ENCODE measurements at regions of chr1 and their contacts with region 1.

Region 1: GRCh38 chr1:27568300-27569087 is 35.5 kb downstream of the AHDC1 start:
- H3K4me3 ChIP-seq: peak overlapping the region; percentile 22
- H3K27ac ChIP-seq: no peak overlapping the region
- H3K4me1 ChIP-seq: peaks cover 8% of the 10 kb centered on the region; the same call in 1 of the 2 replicates
- CTCF ChIP-seq: peak; percentile 86

Region 2: DNA sequence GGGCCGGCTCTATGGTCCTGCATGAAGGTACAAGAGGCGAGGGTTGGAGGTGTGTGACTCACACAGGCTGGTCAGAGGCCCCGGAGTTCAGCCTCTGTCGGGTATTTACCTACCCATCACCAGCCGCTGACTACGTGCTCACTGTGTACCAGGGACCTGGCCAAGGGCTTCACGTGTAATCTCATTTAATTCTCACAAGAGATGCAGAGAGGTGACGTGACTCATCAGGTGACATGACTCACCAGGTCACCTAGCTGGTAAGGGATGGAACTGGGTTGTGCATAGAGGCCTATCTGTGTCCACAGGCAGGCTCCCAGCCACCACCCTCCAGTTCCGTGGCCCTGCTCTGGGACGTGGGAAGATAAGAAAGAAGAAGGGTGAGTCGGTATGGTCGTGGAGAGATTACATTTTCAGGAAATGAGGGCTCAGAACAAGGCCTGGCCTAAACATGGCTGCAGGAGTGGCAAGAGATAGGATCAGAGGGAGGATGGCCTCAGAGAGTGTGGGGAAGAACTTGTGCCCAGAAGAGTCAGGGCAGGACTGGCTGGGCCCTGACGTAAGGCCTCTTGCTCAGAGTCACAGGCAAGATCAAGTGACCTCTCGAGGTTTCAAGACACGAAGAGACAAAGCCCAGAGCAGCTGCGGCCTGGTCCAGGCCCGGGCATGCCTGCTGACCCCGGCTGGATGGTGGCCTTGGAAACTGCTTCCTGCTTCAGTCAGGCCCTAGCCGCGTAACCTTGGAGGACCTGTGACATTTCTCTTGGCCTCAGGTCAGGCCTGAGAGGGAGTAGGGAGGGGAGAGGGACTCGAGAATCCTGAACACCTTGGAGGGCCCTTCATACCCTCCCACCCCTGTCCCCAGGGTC is 25.9 kb before region 1 on chr1:
- CTCF ChIA-PET with region 1: interaction called, 11 read pairs
- POLR2A ChIA-PET with region 1: interaction called, 7 read pairs
- H3K4me3 ChIP-seq: no peak overlapping the region
- H3K27ac ChIP-seq: no peak overlapping the region
- H3K4me1 ChIP-seq: no peaks in the 10 kb centered on the region
- CTCF ChIP-seq: no peak

Region 3: GRCh38 chr1:27581823-27582243 is 13.3 kb after region 1 on chr1:
- CTCF ChIA-PET with region 1: interaction called, 32 read pairs
- POLR2A ChIA-PET with region 1: interaction called, 3 read pairs
- H3K4me3 ChIP-seq: no peak overlapping the region
- H3K27ac ChIP-seq: no peak overlapping the region
- H3K4me1 ChIP-seq: no peaks in the 10 kb centered on the region
- CTCF ChIP-seq: no peak

Measured in HEK293 (cell line).